HepG2 (cell line): ENCODE measurements at regions of chr11 and their contacts with region 1.

Region 1: GRCh38 chr11:20035701-20036620 is 124.3 kb downstream of the DBX1 start:
- DNase-seq: peak; percentile 91
- ATAC-seq: peak; percentile 87
- H3K4me3 ChIP-seq: peak overlapping the region in 2 of 3 experiments; percentile 17 to 53; a peak in 3 of 6 replicates
- H3K27ac ChIP-seq: peak overlapping the region; percentile 63
- H3K4me1 ChIP-seq: peaks cover 74% of the 10 kb centered on the region
- H3K27me3 ChIP-seq: no peaks in the 10 kb centered on the region
- CTCF ChIP-seq: no peak
- EP300 ChIP-seq: peak in 1 of 2 experiments; percentile 92; a peak in 2 of 4 replicates
- POLR2A ChIP-seq: peak; percentile 23 to 38; a peak in 2 of 4 replicates
- RAD21 ChIP-seq: no peak

Region 2: DNA sequence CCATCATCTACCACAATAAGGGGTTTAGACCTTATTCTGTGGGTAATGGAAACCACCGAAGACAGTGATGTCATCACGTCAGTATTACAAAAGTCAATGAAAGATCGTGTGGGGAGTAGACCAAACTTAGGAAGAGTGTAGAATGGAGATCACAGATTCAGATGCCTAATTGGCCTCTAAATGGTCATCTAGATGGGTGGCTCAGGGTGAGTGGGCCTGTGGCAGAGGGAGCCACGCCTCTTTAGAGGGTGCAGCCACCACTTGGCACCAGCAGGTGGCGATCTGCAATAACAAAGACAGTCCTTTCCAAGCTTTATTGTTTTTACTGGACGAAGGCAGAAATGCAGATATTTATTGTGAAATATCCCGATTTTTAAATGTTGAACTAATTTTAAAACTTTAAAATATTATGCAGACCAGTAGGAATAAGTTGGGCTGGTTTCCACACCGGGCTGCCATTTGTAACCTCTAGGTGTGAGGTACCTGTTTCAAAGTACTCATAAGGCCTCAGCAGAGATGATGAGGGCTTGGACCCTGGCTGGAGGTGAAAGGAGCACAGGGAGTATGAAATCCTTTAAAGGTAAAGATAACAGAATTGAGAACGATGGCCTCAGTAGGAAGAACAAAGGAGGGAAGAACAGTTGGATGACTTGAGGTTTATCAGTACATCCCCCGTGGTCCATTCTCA is 97.6 kb before region 1 on chr11:
- CTCF ChIA-PET with region 1: no interaction called
- POLR2A ChIA-PET with region 1: no interaction called
- in situ Hi-C with region 1: no loop called
- intact Hi-C with region 1: no loop called
- DNase-seq: peak; percentile 40
- ATAC-seq: peak; percentile 88
- H3K4me3 ChIP-seq: no peak overlapping the region
- H3K27ac ChIP-seq: no peak overlapping the region
- H3K4me1 ChIP-seq: peaks cover 32% of the 10 kb centered on the region
- H3K27me3 ChIP-seq: no peaks in the 10 kb centered on the region
- CTCF ChIP-seq: peak; percentile 66
- EP300 ChIP-seq: no peak
- POLR2A ChIP-seq: no peak
- RAD21 ChIP-seq: 0 out of 2 replicates have a peak, but pooled peaks have one; percentile 39

Region 3: GRCh38 chr11:19978668-19979518 is 57.1 kb before region 1 on chr11:
- CTCF ChIA-PET with region 1: no interaction called
- POLR2A ChIA-PET with region 1: interaction called, 24 read pairs
- in situ Hi-C with region 1: no loop called
- intact Hi-C with region 1: loop called (anchors 1 kb)
- DNase-seq: peak; percentile 88
- ATAC-seq: peak; percentile 51
- H3K4me3 ChIP-seq: peak overlapping the region; percentile 53 to 58 (median 56)
- H3K27ac ChIP-seq: peak overlapping the region; percentile 72
- H3K4me1 ChIP-seq: peaks cover 83% of the 10 kb centered on the region
- H3K27me3 ChIP-seq: no peaks in the 10 kb centered on the region
- CTCF ChIP-seq: no peak
- EP300 ChIP-seq: peak in 1 of 2 experiments; percentile 94; a peak in 3 of 4 replicates
- POLR2A ChIP-seq: peak; percentile 29 to 44; a peak in 1 of 4 replicates
- RAD21 ChIP-seq: no peak

Region 4: DNA sequence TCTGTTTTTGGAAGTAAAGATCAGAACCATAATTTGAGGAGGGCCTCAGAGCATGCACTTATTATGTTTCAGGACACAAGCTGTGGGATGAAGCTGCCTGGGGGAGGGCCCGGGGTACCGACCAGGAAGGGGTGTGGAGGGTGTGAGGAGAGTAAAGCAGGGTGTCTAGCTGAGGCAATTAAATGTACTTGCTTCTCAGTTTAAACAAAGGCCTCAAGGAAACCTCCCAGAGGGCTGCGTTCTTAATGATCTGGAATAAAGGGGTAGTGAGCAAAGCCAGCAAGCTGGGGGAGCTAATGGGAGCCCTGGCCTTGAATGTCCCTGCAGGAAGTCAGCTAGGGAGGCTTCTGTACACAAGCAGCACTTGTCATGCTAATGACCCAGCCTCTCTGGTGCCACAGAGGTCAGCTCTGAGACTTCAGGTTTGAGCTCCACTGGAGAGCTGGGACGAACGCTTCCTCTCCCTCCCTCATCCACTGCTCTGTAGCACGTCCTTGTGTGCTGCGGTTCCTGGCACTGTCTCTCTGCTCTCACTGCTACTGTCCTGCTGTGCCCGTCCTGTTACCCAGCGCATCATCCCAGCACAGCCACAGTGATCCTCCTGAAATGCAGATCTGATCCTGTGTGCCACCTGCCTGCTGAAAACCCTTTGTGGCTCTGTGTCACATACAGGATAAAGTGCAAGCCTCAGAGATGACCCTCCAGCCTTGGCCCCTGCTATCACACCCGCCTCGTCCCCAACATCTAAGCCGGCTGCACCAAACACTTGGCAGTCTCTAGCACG is 35.4 kb before region 1 on chr11:
- CTCF ChIA-PET with region 1: no interaction called
- POLR2A ChIA-PET with region 1: interaction called, 37 read pairs
- in situ Hi-C with region 1: no loop called
- intact Hi-C with region 1: loop called (anchors 5 kb)
- DNase-seq: peak; percentile 88
- ATAC-seq: peak; percentile 74
- H3K4me3 ChIP-seq: peak overlapping the region; percentile 18 to 65 (median 28); a peak in 5 of 6 replicates
- H3K27ac ChIP-seq: peak overlapping the region; percentile 86
- H3K4me1 ChIP-seq: peaks cover 75% of the 10 kb centered on the region
- H3K27me3 ChIP-seq: no peaks in the 10 kb centered on the region
- CTCF ChIP-seq: peak; percentile 28; the same call in 1 of the 2 replicates
- EP300 ChIP-seq: peak in 1 of 2 experiments; percentile 68; a peak in 2 of 4 replicates
- POLR2A ChIP-seq: peak; percentile 38 to 55; a peak in 2 of 4 replicates
- RAD21 ChIP-seq: peak; percentile 22; the same call in 1 of the 2 replicates

Region 5: DNA sequence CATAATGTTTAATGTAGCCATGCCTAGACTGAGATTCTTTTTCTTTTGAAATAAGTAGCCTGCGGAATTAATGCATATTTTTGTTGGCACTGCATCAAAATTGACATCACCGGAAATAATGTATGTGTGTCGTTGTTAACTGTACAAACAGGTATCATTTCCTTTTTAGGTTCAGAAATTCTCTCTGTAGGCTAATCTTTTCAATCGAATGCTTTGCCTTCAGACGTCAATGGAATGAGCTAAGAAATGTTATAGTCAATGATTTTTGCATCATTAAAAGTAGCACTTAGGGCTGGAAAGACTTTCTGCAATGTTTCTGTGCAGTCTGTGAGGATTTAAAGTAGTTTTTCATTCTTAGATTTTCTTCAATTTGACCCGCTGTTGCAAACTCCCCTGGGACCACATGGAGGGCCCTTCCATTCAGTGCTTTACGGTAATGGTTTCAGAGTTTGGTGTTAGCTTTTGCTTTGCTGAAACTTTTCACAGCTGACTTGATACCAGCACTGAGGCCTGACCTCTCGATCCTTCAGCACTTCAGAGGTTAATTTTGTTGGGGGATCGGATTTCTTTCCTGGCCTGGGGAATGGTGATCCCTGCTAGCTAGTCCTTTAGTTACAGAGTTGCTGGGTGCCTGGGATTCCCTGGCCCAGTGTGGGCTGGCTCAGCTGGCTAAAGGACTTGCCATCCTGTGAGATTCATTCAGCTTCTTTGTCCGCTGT is 13.4 kb before region 1 on chr11:
- CTCF ChIA-PET with region 1: no interaction called
- POLR2A ChIA-PET with region 1: interaction called, 65 read pairs
- in situ Hi-C with region 1: no loop called
- intact Hi-C with region 1: loop called (anchors 1 kb)
- DNase-seq: peak; percentile 79
- ATAC-seq: peak; percentile 75
- H3K4me3 ChIP-seq: peak overlapping the region; percentile 58 to 86 (median 80)
- H3K27ac ChIP-seq: peak overlapping the region; percentile 76
- H3K4me1 ChIP-seq: peaks cover 91% of the 10 kb centered on the region
- H3K27me3 ChIP-seq: no peaks in the 10 kb centered on the region; a peak in 1 of 5 replicates
- CTCF ChIP-seq: no peak
- EP300 ChIP-seq: no peak
- POLR2A ChIP-seq: 0 out of 4 replicates have a peak, but pooled peaks of 1 of the 2 experiments have one; percentile 29
- RAD21 ChIP-seq: no peak

Region 6: GRCh38 chr11:20089796-20090653 is 54.1 kb after region 1 on chr11:
- CTCF ChIA-PET with region 1: no interaction called
- POLR2A ChIA-PET with region 1: no interaction called
- in situ Hi-C with region 1: no loop called
- intact Hi-C with region 1: loop called (anchors 1 kb)
- DNase-seq: peak; percentile 32
- ATAC-seq: no peak
- H3K4me3 ChIP-seq: no peak overlapping the region
- H3K27ac ChIP-seq: peak overlapping the region; percentile 20
- H3K4me1 ChIP-seq: peaks cover 41% of the 10 kb centered on the region
- H3K27me3 ChIP-seq: no peaks in the 10 kb centered on the region
- CTCF ChIP-seq: no peak
- EP300 ChIP-seq: no peak
- POLR2A ChIP-seq: no peak
- RAD21 ChIP-seq: no peak

Region 7: DNA sequence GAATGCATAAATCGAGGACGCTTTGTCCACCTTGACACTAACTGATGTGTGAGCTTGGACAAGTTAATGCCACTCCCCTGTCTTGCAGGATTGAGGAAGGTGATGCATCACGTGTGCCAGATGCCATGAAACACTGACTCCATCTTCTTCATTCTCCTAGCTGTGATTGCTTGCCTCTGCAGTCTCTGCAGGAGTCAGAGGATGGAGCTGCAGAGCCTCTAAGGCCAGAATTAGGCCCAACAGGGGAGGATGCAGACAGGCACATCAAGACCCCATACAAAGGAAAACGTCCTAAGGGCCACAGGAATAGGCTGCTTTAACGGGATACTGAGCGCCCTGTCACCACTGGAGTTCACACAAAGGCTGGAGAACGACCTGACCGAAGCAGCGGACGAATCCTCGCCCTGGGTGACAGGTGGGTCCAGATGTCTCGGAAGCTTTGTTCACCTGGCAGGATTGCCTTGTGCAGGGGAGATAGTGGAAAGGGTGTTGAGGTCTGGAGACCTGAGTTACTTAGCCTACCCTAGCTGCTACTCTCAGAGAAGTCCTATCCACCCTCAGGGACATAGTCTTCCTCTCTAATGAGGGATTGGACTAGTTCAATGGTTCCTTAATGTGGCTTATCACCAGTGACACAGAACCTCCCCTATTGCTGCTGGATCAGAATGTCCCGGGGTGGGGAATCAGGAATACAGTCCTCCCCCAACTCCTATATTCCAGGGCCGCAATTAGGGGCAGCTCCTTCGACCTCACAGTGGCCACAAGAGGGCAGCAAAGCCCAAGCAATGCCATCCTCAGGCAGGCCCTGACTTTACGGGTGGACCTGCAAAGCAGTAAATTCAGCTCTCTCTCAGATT is 91.9 kb after region 1 on chr11:
- CTCF ChIA-PET with region 1: no interaction called
- POLR2A ChIA-PET with region 1: no interaction called
- in situ Hi-C with region 1: no loop called
- intact Hi-C with region 1: no loop called
- DNase-seq: peak; percentile 52
- ATAC-seq: peak; percentile 90
- H3K4me3 ChIP-seq: no peak overlapping the region
- H3K27ac ChIP-seq: no peak overlapping the region
- H3K4me1 ChIP-seq: peaks cover 16% of the 10 kb centered on the region; the same call in 1 of the 2 replicates
- H3K27me3 ChIP-seq: peaks cover 0 to 19% of the 10 kb centered on the region in 2 experiments; a peak in 2 of 5 replicates
- CTCF ChIP-seq: peak; percentile 92
- EP300 ChIP-seq: no peak
- POLR2A ChIP-seq: no peak
- RAD21 ChIP-seq: peak; percentile 66